Activated CD4-positive, alpha-beta T cell treated with anti-CD3 and anti-CD28 coated beads for 36 hours (primary cell): ENCODE measurements at regions of chr2 and their contacts with region 1.

Region 1: DNA sequence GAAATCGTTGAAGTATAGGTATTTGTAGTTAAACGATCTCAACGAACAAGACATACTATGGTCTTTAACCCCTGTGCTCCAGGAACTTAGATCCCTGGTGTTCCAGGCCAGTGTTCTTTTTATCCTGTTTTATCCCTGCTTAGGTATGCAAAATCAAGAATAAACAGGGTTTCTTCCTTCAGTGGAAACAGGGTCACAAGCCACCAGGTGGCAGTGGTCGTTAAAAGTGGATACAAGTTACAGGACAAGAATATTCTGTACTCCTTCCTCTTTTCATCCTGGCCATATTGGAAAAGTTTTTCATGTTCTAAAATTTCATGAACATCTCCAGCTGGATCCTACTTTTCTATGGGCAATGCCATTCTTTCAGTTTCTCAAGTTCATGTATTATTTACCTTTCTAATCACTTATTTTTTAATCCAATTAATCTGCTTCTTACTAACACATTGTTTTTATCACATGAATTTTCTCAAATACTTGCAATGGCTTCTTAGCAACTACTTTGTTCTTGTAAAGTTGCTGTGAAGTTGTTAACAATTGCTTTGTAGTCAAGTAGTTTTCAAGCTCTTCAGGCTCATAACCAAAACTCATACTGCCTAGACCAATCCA is 16.4 kb upstream of the HNMT start:
- DNase-seq: peak; percentile 61
- ATAC-seq: no peak
- H3K4me3 Mint-ChIP-seq: no peak overlapping the region
- H3K27ac Mint-ChIP-seq: no peak overlapping the region
- H3K4me1 Mint-ChIP-seq: peaks cover 3% of the 10 kb centered on the region
- H3K27me3 Mint-ChIP-seq: peaks cover 2% of the 10 kb centered on the region

Region 2: DNA sequence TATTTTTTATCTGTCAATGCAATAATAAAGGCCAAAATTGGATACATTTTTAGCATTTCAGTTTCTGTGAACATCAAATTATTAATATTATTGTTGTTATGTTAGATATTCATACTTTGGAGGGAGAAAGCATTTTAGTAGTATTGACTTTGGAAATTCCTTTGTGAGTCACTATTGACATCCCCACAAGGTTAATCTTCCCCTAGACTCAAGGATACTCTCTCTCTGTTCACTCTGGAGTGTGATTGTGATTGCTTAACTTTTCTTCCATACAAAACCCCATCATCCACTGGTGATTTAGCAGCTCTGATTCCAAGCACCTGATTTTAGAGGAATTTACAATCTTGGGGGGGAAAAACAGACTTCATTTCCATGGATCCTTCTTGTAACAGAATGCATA is 830.4 kb before region 1 on chr2:
- CTCF ChIA-PET with region 1: no interaction called
- POLR2A ChIA-PET with region 1: no interaction called
- intact Hi-C with region 1: no loop called
- DNase-seq: no peak
- ATAC-seq: no peak
- H3K4me3 Mint-ChIP-seq: no peak overlapping the region
- H3K27ac Mint-ChIP-seq: no peak overlapping the region
- H3K4me1 Mint-ChIP-seq: no peaks in the 10 kb centered on the region
- H3K27me3 Mint-ChIP-seq: no peaks in the 10 kb centered on the region

Region 3: DNA sequence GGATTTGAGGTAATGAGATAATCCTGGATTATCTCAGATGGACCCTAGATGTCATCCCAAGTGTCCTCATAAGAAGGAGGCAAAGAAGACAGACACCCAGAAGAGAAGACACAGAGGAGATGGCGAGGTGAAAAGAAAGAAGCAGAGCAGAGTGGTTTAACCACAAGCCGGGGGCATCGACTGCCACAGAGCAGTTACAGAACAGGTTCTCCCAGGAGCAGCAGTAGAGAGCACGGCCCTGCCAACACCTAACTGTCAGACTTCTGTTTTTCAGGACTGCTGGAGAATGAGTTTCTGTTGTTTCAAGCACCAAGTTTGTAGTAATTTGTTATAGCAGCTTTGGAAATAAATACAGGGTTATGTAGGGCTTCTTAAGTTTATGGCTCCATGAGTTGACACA is 745.5 kb before region 1 on chr2:
- CTCF ChIA-PET with region 1: no interaction called
- POLR2A ChIA-PET with region 1: no interaction called
- intact Hi-C with region 1: no loop called
- DNase-seq: no peak
- ATAC-seq: no peak
- H3K4me3 Mint-ChIP-seq: no peak overlapping the region
- H3K27ac Mint-ChIP-seq: no peak overlapping the region
- H3K4me1 Mint-ChIP-seq: no peaks in the 10 kb centered on the region
- H3K27me3 Mint-ChIP-seq: no peaks in the 10 kb centered on the region

Region 4: GRCh38 chr2:138090330-138090729 is 142.5 kb after region 1 on chr2:
- CTCF ChIA-PET with region 1: no interaction called
- POLR2A ChIA-PET with region 1: no interaction called
- intact Hi-C with region 1: loop called in 1 of 2 experiments (anchors 1 kb)
- DNase-seq: no peak
- ATAC-seq: no peak
- H3K4me3 Mint-ChIP-seq: no peak overlapping the region
- H3K27ac Mint-ChIP-seq: no peak overlapping the region
- H3K4me1 Mint-ChIP-seq: no peaks in the 10 kb centered on the region
- H3K27me3 Mint-ChIP-seq: no peaks in the 10 kb centered on the region

Region 5: GRCh38 chr2:138373993-138374408 is 426.2 kb after region 1 on chr2:
- CTCF ChIA-PET with region 1: interaction called, 3 read pairs
- POLR2A ChIA-PET with region 1: no interaction called
- intact Hi-C with region 1: loop called (anchors 2 to 10 kb)
- DNase-seq: peak; percentile 12
- ATAC-seq: no peak
- H3K4me3 Mint-ChIP-seq: no peak overlapping the region
- H3K27ac Mint-ChIP-seq: no peak overlapping the region
- H3K4me1 Mint-ChIP-seq: no peaks in the 10 kb centered on the region
- H3K27me3 Mint-ChIP-seq: no peaks in the 10 kb centered on the region